CD4-positive, alpha-beta memory T cell (primary cell): ENCODE measurements at regions of chr9 and their contacts with region 1.

Region 1: GRCh38 chr9:129962889-129963703 is 79.9 kb downstream of the FNBP1 start:
- DNase-seq: peak; percentile 85 to 94 (median 88)
- H3K4me3 ChIP-seq: peak overlapping the region; percentile 64 to 67
- H3K4me3 Mint-ChIP-seq: peak overlapping the region; percentile 75 to 92 (median 87)
- H3K27ac ChIP-seq: peak overlapping the region; percentile 90
- H3K27ac Mint-ChIP-seq: peak overlapping the region; percentile 95 to 99 (median 98)
- H3K4me1 ChIP-seq: peaks cover 55% of the 10 kb centered on the region
- H3K4me1 Mint-ChIP-seq: peaks cover 45 to 82% (median 66%) of the 10 kb centered on the region in 4 donors
- H3K27me3 ChIP-seq: no peaks in the 10 kb centered on the region
- H3K27me3 Mint-ChIP-seq: no peaks in the 10 kb centered on the region

Region 2: DNA sequence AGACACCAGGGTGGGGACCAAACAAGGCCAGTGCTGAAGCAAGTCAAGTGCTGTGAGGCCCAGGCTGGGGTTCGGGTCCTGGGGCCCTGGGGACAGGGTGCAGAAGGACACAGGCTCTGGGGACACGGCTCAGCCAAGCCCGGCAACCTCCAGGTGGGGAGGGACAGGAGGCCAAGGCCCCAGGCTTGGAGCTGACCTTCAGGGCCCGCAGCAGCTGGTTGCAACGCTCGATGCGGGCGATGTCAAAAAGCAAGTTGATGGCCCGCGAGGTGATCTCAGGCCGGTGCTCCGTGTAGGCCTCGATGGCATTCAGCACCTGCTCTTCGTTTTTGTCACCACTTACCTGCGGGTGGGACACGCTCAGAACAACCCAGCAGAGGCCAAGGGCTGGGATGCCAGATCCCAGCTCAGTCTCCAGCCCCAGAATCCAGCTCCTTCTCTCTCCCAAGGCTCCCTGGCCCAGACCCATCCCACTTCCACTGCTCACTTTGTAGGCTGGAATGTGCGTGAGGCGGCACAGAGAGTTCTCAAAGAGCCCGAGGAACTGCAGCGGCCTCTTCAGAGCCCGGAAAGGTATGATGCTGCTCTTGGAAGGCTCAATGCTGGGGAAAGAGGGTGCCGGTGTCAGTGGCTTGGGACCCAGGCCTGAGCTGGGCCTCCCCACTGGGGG is 1212.0 kb before region 1 on chr9:
- CTCF ChIA-PET with region 1: no interaction called
- POLR2A ChIA-PET with region 1: no interaction called
- intact Hi-C with region 1: no loop called
- DNase-seq: no peak
- H3K4me3 ChIP-seq: no peak overlapping the region
- H3K4me3 Mint-ChIP-seq: no peak overlapping the region
- H3K27ac ChIP-seq: no peak overlapping the region
- H3K27ac Mint-ChIP-seq: peak overlapping the region in 1 of 7 donors; percentile 46
- H3K4me1 ChIP-seq: no peaks in the 10 kb centered on the region
- H3K4me1 Mint-ChIP-seq: peaks cover 0 to 4% (median under 1%) of the 10 kb centered on the region in 4 donors
- H3K27me3 ChIP-seq: no peaks in the 10 kb centered on the region
- H3K27me3 Mint-ChIP-seq: no peaks in the 10 kb centered on the region

Region 3: GRCh38 chr9:129889941-129890717 is 73.0 kb before region 1 on chr9:
- CTCF ChIA-PET with region 1: interaction called, 31 read pairs
- POLR2A ChIA-PET with region 1: interaction called, 98 read pairs
- intact Hi-C with region 1: loop called (anchors 1 kb)
- DNase-seq: peak; percentile 63 to 87 (median 71)
- H3K4me3 ChIP-seq: peak overlapping the region; percentile 12 to 42
- H3K4me3 Mint-ChIP-seq: peak overlapping the region; percentile 87 to 98 (median 94)
- H3K27ac ChIP-seq: peak overlapping the region; percentile 98
- H3K27ac Mint-ChIP-seq: peak overlapping the region; percentile 99 to 100 (median 100)
- H3K4me1 ChIP-seq: peaks cover 91% of the 10 kb centered on the region
- H3K4me1 Mint-ChIP-seq: peaks cover 50 to 98% (median 69%) of the 10 kb centered on the region in 4 donors
- H3K27me3 ChIP-seq: no peaks in the 10 kb centered on the region
- H3K27me3 Mint-ChIP-seq: no peaks in the 10 kb centered on the region

Region 4: DNA sequence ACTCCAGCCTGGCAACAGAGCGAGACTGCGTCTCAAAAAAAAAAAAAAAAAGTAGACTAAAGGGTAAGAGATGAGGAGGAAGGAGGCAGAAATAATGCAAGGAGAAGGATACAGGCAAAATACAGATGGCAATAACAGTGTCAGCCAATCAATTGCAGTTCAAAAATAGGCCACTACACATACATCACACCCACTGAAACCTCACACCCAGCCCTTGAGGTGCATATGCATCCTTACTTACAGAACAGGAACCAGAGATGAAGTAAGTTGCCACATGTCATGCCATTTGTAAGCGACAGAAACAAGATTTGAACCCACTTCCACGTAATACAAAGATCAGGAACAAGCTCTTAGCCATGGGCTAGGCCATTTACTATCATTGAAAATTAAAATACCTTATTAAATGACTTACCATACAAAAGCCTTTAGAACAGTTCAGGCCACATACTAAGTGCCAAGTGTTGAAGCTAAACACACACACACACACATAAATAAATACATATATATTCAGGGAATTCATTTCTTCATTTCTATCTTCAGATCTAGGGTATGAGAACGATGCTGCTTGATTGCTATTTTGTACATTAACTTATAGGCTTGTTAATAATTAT is 18.5 kb before region 1 on chr9:
- CTCF ChIA-PET with region 1: interaction called, 4 read pairs
- POLR2A ChIA-PET with region 1: interaction called, 46 read pairs
- intact Hi-C with region 1: loop called (anchors 1 kb)
- DNase-seq: peak; percentile 70 to 83 (median 80)
- H3K4me3 ChIP-seq: no peak overlapping the region
- H3K4me3 Mint-ChIP-seq: peak overlapping the region; percentile 33 to 80 (median 52)
- H3K27ac ChIP-seq: peak overlapping the region; percentile 60
- H3K27ac Mint-ChIP-seq: peak overlapping the region; percentile 35 to 92 (median 85)
- H3K4me1 ChIP-seq: peaks cover 59% of the 10 kb centered on the region
- H3K4me1 Mint-ChIP-seq: peaks cover 35 to 70% (median 50%) of the 10 kb centered on the region in 4 donors
- H3K27me3 ChIP-seq: no peaks in the 10 kb centered on the region
- H3K27me3 Mint-ChIP-seq: no peaks in the 10 kb centered on the region

Region 5: DNA sequence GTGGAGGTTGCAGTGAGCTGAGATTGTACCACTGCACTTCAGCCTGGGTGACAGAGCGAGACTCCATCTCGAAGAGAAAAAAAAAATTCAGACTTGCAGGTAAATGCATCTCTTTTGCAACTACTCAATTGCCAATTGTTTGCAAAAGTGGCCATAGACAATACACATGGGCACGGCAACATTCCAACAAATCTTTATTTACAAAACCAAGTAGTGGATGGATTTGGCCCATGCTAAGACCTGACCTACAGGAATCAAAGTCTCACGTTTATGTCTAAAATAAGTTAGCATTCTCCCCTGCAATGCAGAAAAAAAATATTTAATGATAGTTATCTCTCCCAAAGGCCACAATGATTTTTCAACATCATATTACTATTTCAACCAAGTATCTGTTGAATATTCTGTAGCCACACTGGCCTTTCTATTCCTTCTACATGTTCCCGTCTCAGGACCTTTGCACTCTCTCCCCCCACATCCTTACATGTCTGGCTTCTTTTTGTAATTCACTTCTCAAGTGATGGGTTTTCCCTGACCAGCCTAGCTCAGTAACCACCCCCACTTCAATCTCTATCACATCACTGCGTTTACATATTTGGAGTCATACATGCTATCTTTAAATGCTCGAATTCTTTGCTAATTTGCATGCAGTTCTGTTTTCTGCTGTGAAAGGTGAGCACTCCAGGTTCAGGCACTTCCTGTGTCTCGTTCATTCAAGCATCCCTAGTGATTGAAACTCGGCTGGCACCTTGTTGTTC is 25.7 kb after region 1 on chr9:
- CTCF ChIA-PET with region 1: interaction called, 3 read pairs
- POLR2A ChIA-PET with region 1: interaction called, 24 read pairs
- intact Hi-C with region 1: no loop called
- DNase-seq: peak in 3 of 5 donors; percentile 26 to 67 (median 33)
- H3K4me3 ChIP-seq: peak overlapping the region in 1 of 2 donors; percentile 36
- H3K4me3 Mint-ChIP-seq: peak overlapping the region in 7 of 8 donors; percentile 23 to 71 (median 44)
- H3K27ac ChIP-seq: peak overlapping the region; percentile 73
- H3K27ac Mint-ChIP-seq: peak overlapping the region; percentile 78 to 94 (median 92)
- H3K4me1 ChIP-seq: peaks cover 75% of the 10 kb centered on the region
- H3K4me1 Mint-ChIP-seq: peaks cover 45 to 83% (median 64%) of the 10 kb centered on the region in 4 donors
- H3K27me3 ChIP-seq: no peaks in the 10 kb centered on the region
- H3K27me3 Mint-ChIP-seq: no peaks in the 10 kb centered on the region

Region 6: GRCh38 chr9:130053504-130054324 is 90.6 kb after region 1 on chr9 and contains the start of gene GPR107:
- CTCF ChIA-PET with region 1: interaction called, 3 read pairs
- POLR2A ChIA-PET with region 1: interaction called, 12 read pairs
- intact Hi-C with region 1: no loop called
- DNase-seq: peak; percentile 71 to 80 (median 79)
- H3K4me3 ChIP-seq: peak within 1 kb of the TSS; percentile 67 to 98
- H3K4me3 Mint-ChIP-seq: peak within 1 kb of the TSS; percentile 90 to 95 (median 95)
- H3K27ac ChIP-seq: peak within 1 kb of the TSS; percentile 95
- H3K27ac Mint-ChIP-seq: peak within 1 kb of the TSS; percentile 91 to 97 (median 95)
- H3K4me1 ChIP-seq: peaks cover 29% of the 10 kb centered on the region
- H3K4me1 Mint-ChIP-seq: peaks cover 18 to 38% (median 28%) of the 10 kb centered on the region in 4 donors
- H3K27me3 ChIP-seq: no peaks in the 10 kb centered on the region
- H3K27me3 Mint-ChIP-seq: no peaks in the 10 kb centered on the region
- total RNA-seq, gene GPR107: 23.8 to 24.4 TPM